Activated CD4-positive, alpha-beta T cell treated with anti-CD3 and anti-CD28 coated beads, Interleukin-2, amount 10 ng/mL, durations not matched to agents 24 days and 14 days (primary cell): ENCODE measurements at regions of chr1 and their contacts with region 1.

Region 1: DNA sequence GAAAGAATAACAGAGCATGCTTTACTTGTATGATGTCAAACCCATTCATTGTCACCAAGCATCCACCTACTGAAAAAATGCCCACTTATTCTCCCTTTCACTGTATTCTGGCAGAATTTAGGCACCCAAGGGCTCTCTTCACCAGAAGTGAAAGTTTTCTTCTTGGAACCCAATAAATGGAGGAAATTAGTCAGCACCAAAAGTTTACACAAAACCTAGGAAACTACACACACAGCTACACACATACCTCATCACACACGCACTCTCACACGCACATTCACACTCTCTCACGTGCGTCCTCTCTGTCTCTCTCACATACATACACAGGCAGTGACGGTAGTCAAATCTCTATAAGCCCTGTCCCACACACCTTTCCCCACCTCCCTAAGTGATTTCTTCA is 37.6 kb downstream of the MCOLN2 start:
- DNase-seq: peak; percentile 85
- H3K4me3 Mint-ChIP-seq: no peak overlapping the region
- H3K27ac Mint-ChIP-seq: peak overlapping the region; percentile 69
- H3K4me1 Mint-ChIP-seq: peaks cover 22% of the 10 kb centered on the region
- H3K27me3 Mint-ChIP-seq: no peaks in the 10 kb centered on the region

Region 2: DNA sequence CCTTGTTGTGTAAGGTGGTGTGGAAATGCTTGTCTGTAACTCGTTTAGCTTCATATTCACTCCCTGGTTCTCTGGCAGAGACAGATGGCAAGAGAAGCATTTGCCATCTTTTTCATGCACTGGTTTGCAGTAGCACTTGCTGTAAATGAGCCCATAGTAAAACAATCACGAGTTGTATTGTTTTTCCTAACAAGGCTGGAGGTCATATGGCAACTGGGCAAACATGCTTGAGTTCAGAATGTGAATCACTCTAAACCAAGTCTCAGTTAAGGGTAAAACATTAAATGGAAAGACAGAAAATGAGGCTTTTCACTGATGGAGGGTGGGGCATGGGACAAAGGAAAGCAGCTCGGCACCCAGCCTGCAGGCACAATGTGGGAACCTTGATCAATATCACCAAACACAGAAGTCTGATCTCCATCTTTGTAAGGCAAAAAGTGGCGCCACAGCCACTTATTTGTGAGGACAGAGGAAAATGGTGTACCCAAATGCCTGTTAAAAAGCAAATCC is 39.8 kb before region 1 on chr1:
- intact Hi-C with region 1: no loop called
- DNase-seq: no peak
- H3K4me3 Mint-ChIP-seq: no peak overlapping the region
- H3K27ac Mint-ChIP-seq: no peak overlapping the region
- H3K4me1 Mint-ChIP-seq: no peaks in the 10 kb centered on the region
- H3K27me3 Mint-ChIP-seq: peaks cover 12% of the 10 kb centered on the region

Region 3: DNA sequence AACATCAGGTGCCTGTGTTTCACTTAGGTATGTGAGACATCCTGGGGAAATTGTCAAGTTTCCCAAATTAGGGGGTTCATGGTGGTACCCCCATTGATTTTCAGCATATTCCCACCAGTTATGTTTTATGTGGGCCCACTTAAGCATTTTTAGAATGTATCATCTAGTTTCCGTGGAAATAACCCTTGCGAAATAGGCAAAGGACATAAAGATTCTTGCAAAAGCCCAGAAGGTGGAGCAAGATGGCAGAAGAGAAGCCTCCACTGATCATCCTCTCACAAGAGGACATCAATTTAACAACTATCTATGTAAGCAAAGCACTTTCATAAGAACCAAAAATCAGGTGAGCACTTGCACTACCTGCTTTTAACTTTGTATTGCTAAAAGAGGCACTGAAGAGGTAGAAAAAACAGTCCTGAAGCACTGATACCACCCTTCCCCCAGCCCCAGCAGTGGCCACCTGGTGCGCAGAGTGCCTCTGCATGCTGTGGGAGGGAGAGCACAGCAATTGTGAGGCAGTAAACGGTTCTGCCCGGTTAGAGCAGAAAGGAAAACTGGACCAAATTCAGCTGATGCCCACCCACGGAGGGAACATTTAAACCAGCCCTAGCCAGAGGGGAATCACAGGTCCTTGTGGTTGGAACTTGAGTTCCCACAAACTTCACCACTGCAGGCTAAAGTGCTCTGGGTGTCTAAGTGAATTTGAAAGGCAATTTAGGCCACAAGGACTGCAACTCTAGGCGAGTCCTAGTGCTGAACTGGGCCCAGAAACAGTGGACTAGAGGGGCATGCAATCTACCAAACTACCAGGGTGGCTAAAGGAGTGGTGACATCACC is 14.4 kb after region 1 on chr1:
- intact Hi-C with region 1: loop called (anchors 1 kb)
- DNase-seq: peak; percentile 65
- H3K4me3 Mint-ChIP-seq: peak overlapping the region; percentile 61
- H3K27ac Mint-ChIP-seq: peak overlapping the region; percentile 83
- H3K4me1 Mint-ChIP-seq: peaks cover 65% of the 10 kb centered on the region
- H3K27me3 Mint-ChIP-seq: no peaks in the 10 kb centered on the region